Activated B cell treated with CpG ODN at 0.5 μM for 24 hours (primary cell): ENCODE measurements at regions of chr3 and their contacts with region 1.

Region 1: DNA sequence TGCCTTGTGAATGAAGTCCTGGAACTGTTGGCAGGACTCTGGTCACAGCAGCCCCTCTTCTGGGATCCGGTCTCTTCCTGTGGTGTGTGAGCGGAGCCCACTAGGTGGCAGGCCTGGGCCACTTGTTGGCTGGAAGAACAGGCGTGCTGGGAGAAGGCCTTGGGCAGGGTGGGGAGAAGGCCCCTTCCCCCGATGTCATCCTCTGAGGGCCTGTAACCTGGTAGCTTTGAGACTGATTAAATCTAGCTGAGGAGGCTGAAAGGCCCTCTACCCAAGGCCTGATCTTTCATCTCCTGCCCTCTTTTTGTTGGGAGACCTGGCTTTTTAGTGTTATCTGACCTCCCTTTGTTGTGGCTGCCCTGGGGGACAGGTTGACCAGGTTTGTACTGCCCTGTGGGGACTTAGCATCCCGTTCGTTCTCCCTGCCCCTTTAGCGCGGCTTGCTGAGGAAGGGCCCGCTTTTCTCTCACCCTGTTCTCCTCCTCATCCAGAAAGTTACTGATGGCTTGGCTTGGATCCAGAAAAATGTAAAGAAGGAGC is 48.3 kb downstream of the CHCHD6 start:
- DNase-seq: peak; percentile 69
- ATAC-seq: peak; percentile 95
- H3K4me3 Mint-ChIP-seq: no peak overlapping the region
- H3K27ac Mint-ChIP-seq: no peak overlapping the region
- H3K4me1 Mint-ChIP-seq: peaks cover 3% of the 10 kb centered on the region
- H3K27me3 Mint-ChIP-seq: no peaks in the 10 kb centered on the region
- CTCF ChIP-seq: peak; percentile 37

Region 2: GRCh38 chr3:126679318-126679751 is 73.0 kb before region 1 on chr3:
- CTCF ChIA-PET with region 1: interaction called, 5 read pairs
- POLR2A ChIA-PET with region 1: no interaction called
- intact Hi-C with region 1: loop called (anchors 2 kb)
- DNase-seq: peak; percentile 78
- ATAC-seq: peak; percentile 86
- H3K4me3 Mint-ChIP-seq: peak overlapping the region; percentile 67
- H3K27ac Mint-ChIP-seq: no peak overlapping the region
- H3K4me1 Mint-ChIP-seq: peaks cover 25% of the 10 kb centered on the region
- H3K27me3 Mint-ChIP-seq: peaks cover 5% of the 10 kb centered on the region
- CTCF ChIP-seq: peak; percentile 86

Region 3: DNA sequence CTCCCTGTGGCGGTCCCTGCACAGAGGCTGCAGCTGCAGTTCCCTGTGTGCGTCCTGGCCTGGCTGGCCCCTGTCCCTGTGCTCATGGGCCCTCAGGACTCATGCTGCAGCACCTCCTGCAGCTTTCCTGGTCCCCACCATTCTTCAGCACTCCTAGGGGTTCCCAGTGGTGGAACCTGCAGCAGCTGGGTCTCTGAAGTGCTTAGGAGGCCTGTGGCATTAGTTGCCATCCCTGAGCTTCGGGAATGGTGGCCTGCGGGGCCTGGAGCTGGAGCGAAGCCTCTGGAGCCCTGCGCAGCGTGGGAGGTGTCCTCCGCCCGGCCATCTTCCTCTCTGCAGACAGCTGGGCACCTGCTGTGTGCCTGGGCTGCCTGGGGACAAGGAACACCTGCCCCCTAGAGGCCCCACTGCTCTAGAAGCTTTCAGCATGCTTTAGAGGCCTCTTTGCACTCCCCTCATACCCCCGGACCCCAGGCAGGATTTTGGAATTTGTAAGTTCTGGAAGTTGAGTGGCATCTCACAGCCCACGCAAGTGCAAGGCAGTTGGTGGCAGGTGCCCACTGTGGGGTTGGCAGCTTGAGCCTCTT is 243.6 kb after region 1 on chr3:
- CTCF ChIA-PET with region 1: interaction called, 6 read pairs
- POLR2A ChIA-PET with region 1: no interaction called
- intact Hi-C with region 1: loop called (anchors 1 kb)
- DNase-seq: no peak
- ATAC-seq: no peak
- H3K4me3 Mint-ChIP-seq: no peak overlapping the region
- H3K27ac Mint-ChIP-seq: no peak overlapping the region
- H3K4me1 Mint-ChIP-seq: peaks cover 9% of the 10 kb centered on the region
- H3K27me3 Mint-ChIP-seq: no peaks in the 10 kb centered on the region
- CTCF ChIP-seq: no peak

Region 4: GRCh38 chr3:127455541-127456450 is 703.4 kb after region 1 on chr3:
- CTCF ChIA-PET with region 1: interaction called, 17 read pairs
- POLR2A ChIA-PET with region 1: no interaction called
- intact Hi-C with region 1: no loop called
- DNase-seq: peak; percentile 49
- ATAC-seq: peak; percentile 80
- H3K4me3 Mint-ChIP-seq: no peak overlapping the region
- H3K27ac Mint-ChIP-seq: no peak overlapping the region
- H3K4me1 Mint-ChIP-seq: peaks cover 4% of the 10 kb centered on the region
- H3K27me3 Mint-ChIP-seq: peaks cover 52% of the 10 kb centered on the region
- CTCF ChIP-seq: no peak

Region 5: DNA sequence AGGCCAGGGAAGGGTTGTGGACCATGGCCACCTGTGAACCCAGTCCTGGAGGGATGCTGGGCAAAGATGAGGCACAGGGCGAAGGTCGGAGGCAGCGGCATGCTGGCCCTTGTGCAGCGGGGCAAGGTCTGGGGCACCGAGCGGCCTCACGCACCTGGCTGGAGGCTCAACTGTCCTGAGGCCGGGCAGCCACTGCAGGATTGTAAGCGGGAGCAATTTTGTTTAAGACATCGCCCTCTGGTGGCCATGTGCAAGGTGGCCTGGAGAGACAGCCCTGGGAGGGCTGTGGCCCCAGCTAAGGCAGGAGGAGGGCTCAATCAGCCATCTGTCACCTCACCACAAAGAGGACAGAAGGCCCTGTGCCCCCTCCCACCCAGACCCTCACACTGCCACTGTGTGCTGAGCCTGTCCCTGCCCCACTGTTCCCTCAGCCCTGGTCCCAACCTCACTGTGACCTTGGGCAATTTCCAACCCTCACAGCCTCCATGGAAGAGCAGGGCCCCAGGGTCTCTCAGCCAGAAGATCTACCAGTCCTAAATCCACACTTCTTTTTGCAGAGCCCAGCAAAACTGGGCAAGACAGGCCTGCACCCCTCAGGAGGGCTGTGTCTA is 791.9 kb after region 1 on chr3:
- CTCF ChIA-PET with region 1: interaction called, 10 read pairs
- POLR2A ChIA-PET with region 1: no interaction called
- intact Hi-C with region 1: loop called (anchors 1 kb)
- DNase-seq: peak; percentile 51
- ATAC-seq: peak; percentile 46
- H3K4me3 Mint-ChIP-seq: no peak overlapping the region
- H3K27ac Mint-ChIP-seq: no peak overlapping the region
- H3K4me1 Mint-ChIP-seq: peaks cover 14% of the 10 kb centered on the region
- H3K27me3 Mint-ChIP-seq: peaks cover 3% of the 10 kb centered on the region
- CTCF ChIP-seq: no peak